ENCODE measurements at regions of chr9 and their contacts with region 1.

Region 1: DNA sequence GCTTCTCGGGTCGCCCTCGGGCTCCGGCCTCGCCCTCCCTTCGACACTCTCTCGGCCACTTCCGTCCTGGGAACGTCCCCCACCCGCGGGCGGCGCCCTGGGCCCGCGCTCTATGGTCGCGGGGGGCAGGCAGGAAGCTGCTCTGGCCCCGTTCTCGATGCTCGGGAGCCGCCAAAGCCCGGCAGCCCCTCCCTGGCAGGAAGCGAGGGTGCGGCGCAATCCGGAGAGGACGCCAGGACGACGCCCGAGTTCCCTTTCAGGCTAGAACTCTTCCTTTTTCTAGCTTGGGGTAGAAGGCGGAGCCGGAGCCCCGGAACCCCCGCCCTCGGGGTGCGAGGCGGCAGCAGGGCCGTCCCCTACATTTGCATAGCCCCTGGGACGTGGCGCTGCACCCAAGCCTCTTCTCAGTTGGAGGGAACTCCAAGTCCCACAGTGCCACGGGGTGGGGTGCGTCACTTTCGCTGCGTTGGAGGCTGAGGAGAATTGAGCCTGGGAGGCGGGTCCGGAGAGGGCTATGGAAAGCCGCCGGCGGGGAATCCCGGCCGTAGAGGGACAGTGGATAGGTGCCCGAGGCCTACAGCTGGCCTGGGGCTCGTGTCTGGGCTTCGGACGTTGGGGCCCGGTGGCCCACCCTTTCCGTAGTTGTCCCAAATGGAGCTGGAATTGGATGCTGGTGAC is at the starts of genes CREB3 and TLN1:
- DNase-seq: peak; percentile 99 to 100 (median 99)
- ATAC-seq: peak; percentile 92 to 94
- H3K4me3 ChIP-seq: peak within 1 kb of the TSS; percentile 64
- H3K27ac ChIP-seq: peak within 1 kb of the TSS; percentile 93
- H3K4me1 ChIP-seq: peaks cover 21% of the 10 kb centered on the region
- H3K27me3 ChIP-seq: no peaks in the 10 kb centered on the region
- total RNA-seq, gene CREB3: 24.5 to 35.4 (median 25.7) TPM
- total RNA-seq, gene TLN1: 263 to 375 (median 298) TPM

Region 2: GRCh38 chr9:35664531-35665470 is 67.5 kb before region 1 on chr9 and contains the start of gene ARHGEF39:
- intact Hi-C with region 1: loop called in 3 of 4 experiments (anchors 5 to 10 kb)
- DNase-seq: peak; percentile 84 to 93 (median 93)
- ATAC-seq: peak; percentile 86 to 88
- H3K4me3 ChIP-seq: peak within 1 kb of the TSS; percentile 48
- H3K27ac ChIP-seq: peak within 1 kb of the TSS; percentile 29
- H3K4me1 ChIP-seq: no peaks in the 10 kb centered on the region
- H3K27me3 ChIP-seq: no peaks in the 10 kb centered on the region
- total RNA-seq, gene ARHGEF39: 0.29 to 0.50 (median 0.34) TPM in 3 of 4 donors, not detected in the other

Region 3: GRCh38 chr9:35690431-35691333 is 41.6 kb before region 1 on chr9:
- intact Hi-C with region 1: loop called in 1 of 4 experiments (anchors 5 kb)
- DNase-seq: peak; percentile 83 to 93 (median 93)
- ATAC-seq: peak; percentile 73 to 78
- H3K4me3 ChIP-seq: peak overlapping the region; percentile 70
- H3K27ac ChIP-seq: peak overlapping the region; percentile 93
- H3K4me1 ChIP-seq: no peaks in the 10 kb centered on the region
- H3K27me3 ChIP-seq: no peaks in the 10 kb centered on the region

Region 4: DNA sequence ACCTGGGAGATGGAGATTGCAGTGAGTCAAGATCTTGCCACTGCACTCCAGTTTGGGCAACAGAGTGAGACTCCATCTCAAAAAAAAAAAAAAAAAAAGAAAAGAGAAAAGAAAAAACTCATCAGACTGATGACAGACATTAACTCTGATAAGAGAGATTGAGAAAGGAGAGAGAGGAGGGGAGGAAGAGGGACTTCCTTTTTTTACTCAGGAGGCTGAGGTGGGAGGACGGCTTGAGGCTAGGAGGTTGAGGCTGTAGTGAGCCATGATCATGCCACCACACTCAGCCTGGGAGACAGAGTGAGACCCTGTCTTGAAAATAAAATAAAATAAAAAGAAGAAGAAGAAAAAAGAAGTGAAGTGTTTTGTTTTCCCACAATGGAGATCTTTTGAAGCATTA is 31.5 kb after region 1 on chr9:
- intact Hi-C with region 1: loop called in 1 of 4 experiments (anchors 2 kb)
- DNase-seq: no peak
- ATAC-seq: no peak
- H3K4me3 ChIP-seq: no peak overlapping the region
- H3K27ac ChIP-seq: no peak overlapping the region
- H3K4me1 ChIP-seq: no peaks in the 10 kb centered on the region
- H3K27me3 ChIP-seq: no peaks in the 10 kb centered on the region